ENCODE measurements at regions of chr10 and their contacts with region 1.

Region 1: GRCh38 chr10:97731346-97732051 is 5.4 kb upstream of the ZFYVE27 start:
- DNase-seq: peak; percentile 83
- H3K4me3 ChIP-seq: no peak overlapping the region
- H3K27ac ChIP-seq: no peak overlapping the region
- H3K4me1 ChIP-seq: no peaks in the 10 kb centered on the region
- H3K27me3 ChIP-seq: no peaks in the 10 kb centered on the region
- CTCF ChIP-seq: peak; percentile 85

Region 2: DNA sequence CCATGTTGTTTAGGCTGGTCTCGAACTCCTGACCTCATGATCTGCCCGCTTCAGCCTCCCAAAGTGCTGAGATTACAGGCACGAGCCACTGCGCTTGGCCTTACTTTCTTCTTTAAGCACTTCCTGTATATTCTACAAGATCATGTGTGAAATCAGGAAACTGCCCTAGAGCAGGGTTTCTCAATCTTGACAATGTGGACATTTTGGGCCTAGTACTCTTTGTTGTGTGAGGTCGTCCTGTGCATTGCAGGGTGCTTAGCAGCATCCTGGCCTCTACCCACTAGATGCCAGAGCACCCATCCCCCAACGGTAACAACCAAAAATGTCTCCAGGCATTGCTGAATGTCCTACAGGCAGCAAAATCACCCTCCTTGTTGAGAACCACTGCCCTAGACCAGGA is 355.1 kb before region 1 on chr10:
- CTCF ChIA-PET with region 1: no interaction called
- POLR2A ChIA-PET with region 1: no interaction called
- intact Hi-C with region 1: no loop called
- DNase-seq: no peak
- H3K4me3 ChIP-seq: no peak overlapping the region
- H3K27ac ChIP-seq: no peak overlapping the region
- H3K4me1 ChIP-seq: no peaks in the 10 kb centered on the region
- H3K27me3 ChIP-seq: no peaks in the 10 kb centered on the region
- CTCF ChIP-seq: no peak

Region 3: GRCh38 chr10:97400665-97401454 is 330.6 kb before region 1 on chr10 and contains the start of gene RRP12:
- CTCF ChIA-PET with region 1: no interaction called
- POLR2A ChIA-PET with region 1: interaction called, 13 read pairs
- intact Hi-C with region 1: no loop called
- DNase-seq: peak; percentile 99
- H3K4me3 ChIP-seq: peak within 1 kb of the TSS; percentile 99
- H3K27ac ChIP-seq: peak within 1 kb of the TSS; percentile 86
- H3K4me1 ChIP-seq: peaks cover 10% of the 10 kb centered on the region
- H3K27me3 ChIP-seq: no peaks in the 10 kb centered on the region
- CTCF ChIP-seq: 0 out of 2 replicates have a peak, but pooled peaks have one; percentile 18
- total RNA-seq, gene RRP12: 68.6 and 86.2 TPM in 2 replicates

Region 4: DNA sequence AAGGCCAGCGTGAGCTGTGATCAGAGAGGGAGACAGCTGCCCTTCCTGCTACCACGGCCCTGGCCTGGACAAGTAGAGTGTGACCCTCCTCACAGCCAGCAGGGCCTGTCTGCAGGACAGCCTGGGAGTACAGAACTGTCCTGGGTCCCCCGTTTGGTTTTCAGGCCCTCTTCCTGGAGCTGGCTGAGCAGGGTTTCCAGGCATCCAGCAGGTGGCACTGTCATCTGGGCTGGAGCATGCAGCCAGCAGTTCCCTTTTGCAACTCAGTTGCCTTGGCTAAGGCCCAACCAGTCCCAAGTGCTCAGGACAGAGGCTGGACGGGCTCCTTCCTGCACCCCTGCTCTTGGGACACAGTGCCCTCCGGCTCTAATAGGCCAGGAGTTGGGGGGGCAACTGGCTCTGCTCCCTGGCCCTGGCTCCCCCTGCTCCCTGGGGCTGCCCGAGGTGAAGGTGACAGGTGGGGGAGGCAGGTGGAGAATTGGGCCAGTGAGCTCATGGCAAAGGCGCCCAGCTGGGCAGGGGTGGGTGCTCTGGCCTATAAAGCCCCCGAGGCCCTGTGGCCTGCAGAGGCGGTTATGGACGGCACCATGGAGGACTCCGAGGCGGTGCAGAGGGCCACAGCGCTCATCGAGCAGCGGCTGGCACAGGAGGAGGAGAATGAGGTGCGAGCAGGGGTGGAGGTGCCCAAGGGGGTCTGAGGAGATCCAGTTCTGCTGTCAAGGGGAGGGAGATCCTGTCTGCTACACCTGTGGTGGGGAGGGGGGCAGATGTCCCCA is 159.1 kb before region 1 on chr10 and contains the start of gene ANKRD2:
- CTCF ChIA-PET with region 1: no interaction called
- POLR2A ChIA-PET with region 1: no interaction called
- intact Hi-C with region 1: loop called (anchors 5 kb)
- DNase-seq: peak; percentile 77
- H3K4me3 ChIP-seq: no peak within 1 kb of the TSS
- H3K27ac ChIP-seq: no peak within 1 kb of the TSS
- H3K4me1 ChIP-seq: no peaks in the 10 kb centered on the region
- H3K27me3 ChIP-seq: no peaks in the 10 kb centered on the region
- CTCF ChIP-seq: peak; percentile 96
- total RNA-seq, gene ANKRD2: not detected in 2 replicates

Region 5: DNA sequence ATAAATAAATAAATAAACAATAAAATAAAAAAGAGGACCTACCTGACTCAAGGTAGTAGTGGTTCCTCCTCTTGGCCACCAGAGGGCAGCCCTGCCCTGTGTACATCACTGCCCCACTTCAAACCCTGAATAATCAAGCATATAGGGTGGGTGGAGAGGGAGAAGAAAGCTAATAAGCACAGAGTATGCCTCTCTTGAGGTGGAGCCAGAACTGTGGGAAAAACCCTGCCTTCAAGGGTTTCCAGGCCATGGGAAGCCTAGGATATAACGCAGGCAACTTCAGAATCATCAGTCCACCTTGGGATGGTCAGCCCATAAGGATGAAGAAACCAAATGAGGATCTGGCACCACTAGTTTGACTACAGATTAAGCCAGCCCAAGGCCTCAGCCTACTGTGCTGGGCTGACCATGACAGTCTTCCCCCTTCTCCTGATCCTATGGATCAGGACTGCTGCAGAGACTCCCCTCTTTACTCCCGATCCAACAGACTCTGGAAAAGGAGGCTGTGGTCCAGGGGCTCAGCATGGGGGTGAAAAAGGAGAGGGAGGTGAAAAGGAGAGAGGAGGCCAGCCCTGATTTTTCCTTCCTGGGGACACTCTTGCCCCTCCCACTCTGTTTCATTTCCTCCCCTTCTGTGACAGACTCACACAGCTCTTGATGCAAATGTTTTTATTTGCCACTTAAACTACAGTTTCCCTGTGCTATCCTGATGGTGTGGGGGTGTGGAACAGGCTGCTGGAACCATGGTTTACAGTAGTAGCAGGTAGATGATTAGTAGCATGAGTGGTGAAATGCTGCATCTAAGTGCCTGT is 54.5 kb before region 1 on chr10:
- CTCF ChIA-PET with region 1: interaction called, 4 read pairs
- POLR2A ChIA-PET with region 1: no interaction called
- intact Hi-C with region 1: loop called (anchors 1 kb)
- DNase-seq: peak; percentile 65
- H3K4me3 ChIP-seq: no peak overlapping the region
- H3K27ac ChIP-seq: no peak overlapping the region
- H3K4me1 ChIP-seq: no peaks in the 10 kb centered on the region
- H3K27me3 ChIP-seq: no peaks in the 10 kb centered on the region
- CTCF ChIP-seq: peak; percentile 81

Region 6: GRCh38 chr10:97701438-97702069 is 29.9 kb before region 1 on chr10:
- CTCF ChIA-PET with region 1: interaction called, 8 read pairs
- POLR2A ChIA-PET with region 1: no interaction called
- intact Hi-C with region 1: loop called (anchors 2 kb)
- DNase-seq: peak; percentile 81
- H3K4me3 ChIP-seq: no peak overlapping the region
- H3K27ac ChIP-seq: no peak overlapping the region
- H3K4me1 ChIP-seq: no peaks in the 10 kb centered on the region
- H3K27me3 ChIP-seq: no peaks in the 10 kb centered on the region
- CTCF ChIP-seq: peak; percentile 88

Region 7: DNA sequence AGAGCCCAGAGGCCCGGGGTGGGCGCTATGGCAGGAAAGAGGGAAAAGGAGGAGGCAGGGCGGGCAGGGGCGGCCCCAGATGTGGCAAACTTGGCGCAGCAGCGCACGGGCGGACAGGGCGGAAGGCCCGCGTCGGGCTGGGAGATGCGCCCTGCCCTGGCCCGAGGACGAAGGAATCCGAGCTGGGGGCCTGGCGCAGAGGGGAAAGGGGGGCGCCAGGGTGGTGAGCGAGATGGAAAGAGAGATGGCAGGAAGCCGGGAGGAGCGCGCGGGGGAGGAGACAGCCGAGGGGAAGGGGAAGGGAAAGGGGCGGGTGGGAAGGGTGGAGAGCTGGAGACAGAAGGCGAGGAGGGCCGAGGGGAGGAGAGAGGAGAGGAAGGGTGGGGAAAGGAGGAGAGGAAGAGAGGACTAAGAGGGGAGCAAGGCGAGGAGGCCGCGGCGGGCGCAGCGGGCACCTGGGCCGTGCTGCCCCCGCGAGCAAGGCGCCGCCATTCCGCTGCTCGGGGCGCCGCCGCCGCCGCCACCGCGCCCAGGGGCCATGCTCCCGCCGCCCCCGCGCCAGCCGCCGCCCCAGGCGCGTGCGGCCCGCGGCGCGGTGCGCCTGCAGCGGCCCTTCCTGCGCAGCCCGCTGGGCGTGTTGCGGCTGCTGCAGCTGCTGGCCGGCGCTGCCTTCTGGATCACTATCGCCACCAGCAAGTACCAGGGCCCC is 18.0 kb before region 1 on chr10 and contains the start of gene MARVELD1:
- CTCF ChIA-PET with region 1: interaction called, 9 read pairs
- POLR2A ChIA-PET with region 1: interaction called, 15 read pairs
- intact Hi-C with region 1: loop called (anchors 1 kb)
- DNase-seq: peak; percentile 87
- H3K4me3 ChIP-seq: peak within 1 kb of the TSS; percentile 82
- H3K27ac ChIP-seq: peak within 1 kb of the TSS; percentile 83
- H3K4me1 ChIP-seq: peaks cover 22% of the 10 kb centered on the region
- H3K27me3 ChIP-seq: no peaks in the 10 kb centered on the region
- CTCF ChIP-seq: no peak
- total RNA-seq, gene MARVELD1: 26.6 and 30.1 TPM in 2 replicates

Region 8: GRCh38 chr10:98125940-98126631 is 394.6 kb after region 1 on chr10:
- CTCF ChIA-PET with region 1: no interaction called
- POLR2A ChIA-PET with region 1: no interaction called
- intact Hi-C with region 1: no loop called
- DNase-seq: peak; percentile 12
- H3K4me3 ChIP-seq: no peak overlapping the region
- H3K27ac ChIP-seq: no peak overlapping the region
- H3K4me1 ChIP-seq: no peaks in the 10 kb centered on the region
- H3K27me3 ChIP-seq: peaks cover 5% of the 10 kb centered on the region
- CTCF ChIP-seq: no peak

Measured in A673 (cell line).